OCI-LY7 (cell line): ENCODE measurements at regions of chr14 and their contacts with region 1.

Region 1: DNA sequence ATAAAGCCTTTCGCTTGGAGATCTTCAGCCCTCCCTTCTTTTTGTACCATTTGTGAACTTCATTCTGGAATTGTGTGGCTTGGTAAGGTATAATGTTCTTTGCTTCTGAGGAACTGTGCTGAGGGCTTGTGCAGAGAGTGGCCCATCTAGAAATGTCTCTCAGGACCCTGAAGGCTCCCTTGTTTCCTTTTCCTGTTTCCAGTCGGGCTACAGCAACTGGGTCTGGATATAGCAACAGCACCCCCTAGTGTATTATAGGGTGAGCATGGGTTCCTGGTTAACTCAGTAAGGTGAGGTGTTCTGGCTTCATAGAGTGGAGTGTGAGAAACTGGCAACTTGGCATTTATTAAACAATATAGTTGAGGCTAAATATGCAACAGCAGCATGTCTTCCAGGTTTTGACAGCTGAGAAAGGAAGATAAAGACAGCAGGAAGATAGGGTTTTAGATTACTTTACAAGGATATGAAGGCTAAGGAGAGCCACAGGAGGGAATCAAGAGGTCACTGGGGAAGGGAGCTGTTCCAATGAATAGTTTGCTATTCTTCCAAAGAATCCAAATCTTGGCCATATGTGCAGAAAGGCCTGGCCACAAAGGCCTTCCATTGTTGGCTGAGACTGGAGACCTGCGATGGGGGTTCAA is 49.1 kb upstream of the RNU6-8 start:
- DNase-seq: peak; percentile 79
- H3K4me3 ChIP-seq: no peak overlapping the region
- H3K27ac ChIP-seq: no peak overlapping the region
- H3K4me1 ChIP-seq: no peaks in the 10 kb centered on the region
- CTCF ChIP-seq: peak; percentile 95

Region 2: GRCh38 chr14:31510222-31510621 is 741.9 kb before region 1 on chr14:
- CTCF ChIA-PET with region 1: no interaction called
- POLR2A ChIA-PET with region 1: no interaction called
- intact Hi-C with region 1: loop called (anchors 2 kb)
- DNase-seq: peak; percentile 39
- H3K4me3 ChIP-seq: no peak overlapping the region
- H3K27ac ChIP-seq: no peak overlapping the region
- H3K4me1 ChIP-seq: no peaks in the 10 kb centered on the region
- CTCF ChIP-seq: peak; percentile 87

Region 3: DNA sequence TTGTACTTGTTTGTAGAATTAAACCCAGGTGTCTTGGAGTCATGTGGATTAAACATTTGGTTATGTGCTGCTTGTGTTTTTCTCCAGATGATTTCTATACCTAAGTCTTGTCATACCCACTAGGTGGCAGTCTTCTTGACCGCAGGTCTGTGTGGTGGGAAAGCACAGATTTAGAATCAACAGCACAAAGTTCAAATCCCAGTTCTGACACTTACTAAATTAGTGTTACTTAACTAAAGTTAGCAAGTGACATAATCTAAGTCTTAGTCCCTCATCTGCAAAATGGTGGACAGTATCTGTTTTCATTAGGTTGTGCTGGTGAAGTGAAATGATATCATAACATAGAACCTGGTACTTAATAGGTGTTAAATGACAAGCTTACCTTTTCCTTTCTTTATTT is 326.0 kb before region 1 on chr14:
- CTCF ChIA-PET with region 1: interaction called, 6 read pairs
- POLR2A ChIA-PET with region 1: interaction called, 4 read pairs
- intact Hi-C with region 1: loop called (anchors 1 kb)
- DNase-seq: peak; percentile 65
- H3K4me3 ChIP-seq: no peak overlapping the region
- H3K27ac ChIP-seq: no peak overlapping the region
- H3K4me1 ChIP-seq: no peaks in the 10 kb centered on the region
- CTCF ChIP-seq: peak; percentile 91

Region 4: DNA sequence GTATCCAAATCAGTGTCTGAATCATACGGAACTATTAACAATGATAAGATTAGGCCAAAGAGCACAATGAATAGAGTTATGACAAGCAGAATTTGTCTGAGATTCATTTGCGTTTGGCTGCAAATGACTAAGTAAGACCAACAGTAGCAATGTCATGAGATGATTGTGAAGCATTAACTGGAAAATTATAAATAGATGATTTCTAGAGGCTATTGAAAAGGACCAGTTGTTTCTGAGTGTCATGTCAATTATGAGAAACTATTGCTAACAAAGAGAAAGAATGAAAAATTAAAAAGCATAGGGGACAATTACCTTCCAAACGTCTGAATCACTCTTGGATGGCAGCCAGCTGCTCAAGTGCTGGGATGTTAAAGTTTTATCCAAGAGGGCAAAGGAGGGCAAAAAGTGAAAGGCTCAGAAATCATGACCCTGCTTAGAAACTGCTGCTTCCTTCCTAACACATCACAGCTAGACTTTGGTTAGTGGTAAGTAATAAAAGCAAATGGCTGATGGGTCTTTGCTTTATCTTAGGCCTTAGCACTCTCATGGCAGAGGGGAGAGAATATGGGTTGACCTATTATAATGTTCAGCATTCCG is 165.9 kb after region 1 on chr14:
- CTCF ChIA-PET with region 1: no interaction called
- POLR2A ChIA-PET with region 1: no interaction called
- intact Hi-C with region 1: no loop called
- DNase-seq: no peak
- H3K4me3 ChIP-seq: no peak overlapping the region
- H3K27ac ChIP-seq: no peak overlapping the region
- H3K4me1 ChIP-seq: no peaks in the 10 kb centered on the region
- CTCF ChIP-seq: no peak

Region 5: GRCh38 chr14:32469388-32470160 is 217.4 kb after region 1 on chr14:
- CTCF ChIA-PET with region 1: no interaction called
- POLR2A ChIA-PET with region 1: no interaction called
- intact Hi-C with region 1: loop called (anchors 5 kb)
- DNase-seq: peak; percentile 31
- H3K4me3 ChIP-seq: no peak overlapping the region
- H3K27ac ChIP-seq: no peak overlapping the region
- H3K4me1 ChIP-seq: no peaks in the 10 kb centered on the region
- CTCF ChIP-seq: peak; percentile 78

Region 6: DNA sequence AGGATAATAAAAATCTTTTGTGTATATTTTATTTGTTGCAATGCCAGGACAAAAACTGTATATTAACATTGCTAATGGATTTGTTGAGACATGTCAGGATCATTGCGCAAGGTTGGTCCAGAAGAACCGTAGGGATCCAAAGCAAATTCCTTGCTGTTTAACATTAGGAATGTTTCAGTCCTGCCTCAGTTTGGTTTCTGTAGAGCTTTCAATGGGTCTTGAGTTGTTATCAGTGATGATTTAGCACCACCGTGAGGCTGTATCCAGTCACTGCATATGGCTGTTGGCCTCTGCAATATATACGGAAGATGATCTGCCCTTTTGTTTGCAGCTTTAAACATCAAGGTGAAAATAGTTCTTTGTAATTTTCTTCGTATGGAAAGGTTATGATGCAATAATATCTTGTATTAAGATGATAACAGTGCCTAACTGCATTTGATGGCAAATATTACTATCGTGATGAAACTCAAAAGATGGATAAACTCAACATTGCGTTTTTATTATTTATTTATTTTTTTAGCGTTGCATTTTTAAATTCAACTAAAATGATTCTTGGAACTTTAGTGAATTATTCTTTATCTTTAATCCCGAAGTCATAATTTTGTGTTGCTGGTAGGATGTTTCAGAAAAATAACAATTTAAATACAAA is 308.2 kb after region 1 on chr14:
- CTCF ChIA-PET with region 1: no interaction called
- POLR2A ChIA-PET with region 1: no interaction called
- intact Hi-C with region 1: loop called (anchors 2 kb)
- DNase-seq: peak; percentile 54
- H3K4me3 ChIP-seq: no peak overlapping the region
- H3K27ac ChIP-seq: no peak overlapping the region
- H3K4me1 ChIP-seq: no peaks in the 10 kb centered on the region
- CTCF ChIP-seq: peak; percentile 90